ENCODE measurements at regions of chr2 and their contacts with region 1.

Region 1: DNA sequence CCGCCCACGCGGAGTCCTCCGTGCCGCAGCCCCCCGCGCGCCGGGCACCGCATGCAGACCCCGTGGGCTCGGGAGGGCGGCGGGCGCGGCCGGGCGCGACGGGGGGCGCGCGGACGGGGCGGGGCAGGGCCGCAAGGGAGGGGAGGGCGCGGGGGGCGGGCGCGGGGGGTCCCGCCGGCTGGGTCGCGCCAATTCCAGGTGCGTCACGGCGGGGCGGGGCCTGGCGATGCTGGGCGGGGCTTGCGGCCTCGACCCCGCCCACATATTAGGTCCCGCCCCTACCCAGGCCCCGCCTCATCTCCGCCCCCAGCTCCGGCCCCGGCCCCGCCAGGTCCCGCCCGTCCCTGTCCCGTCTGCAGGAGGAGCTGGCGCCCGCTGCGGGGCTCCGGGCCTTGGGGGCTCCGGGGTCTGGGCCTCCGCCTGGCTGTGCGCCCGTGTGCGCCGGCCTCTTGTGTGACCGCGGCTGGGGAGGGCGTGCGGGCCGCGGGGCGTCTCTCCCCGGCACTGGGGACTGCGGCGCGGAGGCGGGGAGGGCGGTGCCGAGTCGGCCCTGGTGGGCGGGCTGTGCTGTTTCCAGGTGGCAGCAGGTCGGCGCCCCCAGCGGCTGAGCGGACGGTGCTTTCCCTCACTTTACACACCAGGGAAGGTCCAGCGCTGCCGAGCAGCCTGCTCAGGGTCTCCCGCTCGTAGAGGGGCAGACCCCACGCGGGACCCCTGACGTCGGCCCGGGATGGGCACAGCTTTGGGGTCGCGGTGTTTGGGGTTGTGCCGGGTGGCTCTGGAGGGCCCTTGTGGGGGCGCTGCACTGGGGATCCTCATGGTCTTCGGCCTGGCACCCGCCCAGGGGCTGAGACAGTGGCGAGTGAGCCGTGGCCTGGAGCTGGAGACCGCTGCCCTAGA is 543 bp downstream of the ING5 start:
- DNase-seq: peak; percentile 94
- ATAC-seq: peak; percentile 70
- H3K4me3 Mint-ChIP-seq: peak overlapping the region; percentile 86
- H3K27ac Mint-ChIP-seq: peak overlapping the region; percentile 75
- H3K4me1 Mint-ChIP-seq: peaks cover 29% of the 10 kb centered on the region
- H3K27me3 Mint-ChIP-seq: no peaks in the 10 kb centered on the region

Region 2: GRCh38 chr2:241540771-241541561 is 161.4 kb before region 1 on chr2:
- CTCF ChIA-PET with region 1: no interaction called
- POLR2A ChIA-PET with region 1: no interaction called
- intact Hi-C with region 1: loop called in 1 of 2 experiments (anchors 1 kb)
- DNase-seq: peak; percentile 90
- ATAC-seq: peak; percentile 92
- H3K4me3 Mint-ChIP-seq: peak overlapping the region; percentile 31
- H3K27ac Mint-ChIP-seq: no peak overlapping the region
- H3K4me1 Mint-ChIP-seq: peaks cover 4% of the 10 kb centered on the region
- H3K27me3 Mint-ChIP-seq: peaks cover 14% of the 10 kb centered on the region

Region 3: DNA sequence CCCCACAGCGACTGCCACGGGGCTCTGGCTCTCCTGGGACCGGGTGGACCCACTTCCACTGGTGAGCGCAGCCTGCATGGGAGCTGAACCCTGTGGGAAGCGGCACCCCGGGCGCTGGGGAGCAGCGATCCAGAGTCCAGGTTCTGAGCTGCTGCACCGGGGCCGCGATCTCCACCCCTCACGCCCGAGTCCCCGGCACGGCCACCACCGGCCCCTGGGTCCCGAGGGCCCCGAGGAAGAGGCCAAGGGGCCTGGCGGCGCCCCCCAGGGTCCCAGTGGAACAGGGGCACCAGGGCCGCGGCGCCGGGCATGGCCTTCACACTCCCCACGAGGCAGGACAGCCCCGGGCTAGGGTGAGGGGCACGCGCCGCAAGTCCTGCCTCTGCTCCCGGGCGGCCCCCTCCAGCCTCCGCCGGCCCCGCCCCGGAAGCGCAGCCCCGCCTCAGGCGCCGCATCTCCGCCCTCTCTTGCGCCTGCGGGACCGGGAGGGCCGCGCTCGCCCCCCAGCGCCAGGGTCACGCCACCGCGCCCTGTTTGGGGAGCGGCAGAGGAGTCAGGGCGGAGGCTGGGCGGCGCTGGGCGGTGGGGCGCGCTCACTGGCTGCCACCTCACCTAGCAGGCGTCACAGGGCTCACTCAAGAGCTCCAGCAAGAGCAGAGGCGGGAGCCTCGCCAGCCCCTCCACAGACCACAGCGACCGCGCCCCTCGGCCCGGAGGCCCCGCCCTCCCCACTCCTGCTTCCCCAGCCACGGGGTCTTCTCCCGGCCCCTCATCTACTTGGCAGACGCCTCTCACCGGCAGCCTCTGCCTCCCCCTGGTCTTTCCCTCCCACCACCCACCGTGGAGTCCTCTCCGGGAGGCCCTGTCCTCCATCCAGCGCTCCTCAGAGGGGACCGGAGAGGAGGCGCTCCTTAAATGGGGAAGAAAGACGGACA is 92.3 kb before region 1 on chr2:
- CTCF ChIA-PET with region 1: no interaction called
- POLR2A ChIA-PET with region 1: interaction called, 3 read pairs
- intact Hi-C with region 1: loop called in 1 of 2 experiments (anchors 1 kb)
- DNase-seq: peak; percentile 96
- ATAC-seq: peak; percentile 100
- H3K4me3 Mint-ChIP-seq: peak overlapping the region; percentile 48
- H3K27ac Mint-ChIP-seq: peak overlapping the region; percentile 67
- H3K4me1 Mint-ChIP-seq: peaks cover 14% of the 10 kb centered on the region
- H3K27me3 Mint-ChIP-seq: no peaks in the 10 kb centered on the region

Region 4: GRCh38 chr2:241629762-241630435 is 72.5 kb before region 1 on chr2:
- CTCF ChIA-PET with region 1: no interaction called
- POLR2A ChIA-PET with region 1: no interaction called
- intact Hi-C with region 1: no loop called
- DNase-seq: no peak
- ATAC-seq: no peak
- H3K4me3 Mint-ChIP-seq: no peak overlapping the region
- H3K27ac Mint-ChIP-seq: no peak overlapping the region
- H3K4me1 Mint-ChIP-seq: peaks cover 5% of the 10 kb centered on the region
- H3K27me3 Mint-ChIP-seq: no peaks in the 10 kb centered on the region

Region 5: GRCh38 chr2:241678784-241679540 is 23.4 kb before region 1 on chr2:
- CTCF ChIA-PET with region 1: no interaction called
- POLR2A ChIA-PET with region 1: interaction called, 12 read pairs
- intact Hi-C with region 1: no loop called
- DNase-seq: no peak
- ATAC-seq: no peak
- H3K4me3 Mint-ChIP-seq: no peak overlapping the region
- H3K27ac Mint-ChIP-seq: no peak overlapping the region
- H3K4me1 Mint-ChIP-seq: peaks cover 6% of the 10 kb centered on the region
- H3K27me3 Mint-ChIP-seq: no peaks in the 10 kb centered on the region

Region 6: DNA sequence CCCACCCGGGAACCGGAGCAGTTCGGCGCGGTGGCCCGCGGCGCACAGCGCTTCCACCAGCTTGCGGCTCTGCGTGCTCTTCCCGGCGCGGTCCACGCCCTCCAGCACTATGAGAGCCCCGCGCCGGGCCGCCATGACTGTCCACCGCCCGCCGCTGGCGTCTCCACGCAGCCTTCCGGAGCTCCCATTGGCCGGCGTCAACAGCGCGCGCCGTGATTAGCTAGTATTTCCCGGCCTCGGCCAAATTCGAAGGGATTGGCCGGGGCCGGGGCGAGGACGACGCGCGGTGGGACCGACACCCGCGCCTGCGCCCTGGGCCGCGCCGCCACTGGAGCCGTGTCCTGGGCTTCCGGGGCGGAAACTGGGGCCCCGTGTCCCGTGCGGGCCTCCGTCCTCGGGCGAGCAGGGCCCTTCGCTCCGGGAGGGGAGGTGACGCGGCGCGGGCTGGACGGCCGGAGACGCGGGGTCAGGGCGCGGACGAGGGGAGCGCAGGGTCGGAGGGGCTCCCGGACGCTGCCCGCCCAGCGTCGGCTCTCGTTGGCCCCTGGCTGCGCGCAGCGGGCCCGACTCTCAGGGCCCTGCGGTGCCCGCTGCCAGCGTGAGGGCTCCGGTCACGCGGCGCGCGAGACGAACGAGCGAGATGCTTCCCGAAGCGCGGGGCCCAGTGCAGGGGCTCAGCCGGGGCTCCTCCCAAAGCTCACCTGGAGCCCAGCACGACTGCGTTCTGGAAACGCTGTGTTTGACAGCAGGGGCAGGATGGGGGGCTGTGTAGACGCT is 15.5 kb before region 1 on chr2 and contains the start of gene DTYMK:
- CTCF ChIA-PET with region 1: interaction called, 33 read pairs
- POLR2A ChIA-PET with region 1: interaction called, 31 read pairs
- intact Hi-C with region 1: loop called (anchors 1 kb)
- DNase-seq: peak; percentile 98
- ATAC-seq: peak; percentile 96
- H3K4me3 Mint-ChIP-seq: peak within 1 kb of the TSS; percentile 98
- H3K27ac Mint-ChIP-seq: peak within 1 kb of the TSS; percentile 96
- H3K4me1 Mint-ChIP-seq: peaks cover 32% of the 10 kb centered on the region
- H3K27me3 Mint-ChIP-seq: no peaks in the 10 kb centered on the region
- total RNA-seq, gene DTYMK: 79.8 to 93.1 TPM